ENCODE measurements at regions of chr17 and their contacts with region 1.

Region 1: GRCh38 chr17:49899191-49899485 is 51.3 kb upstream of the TAC4 start:
- DNase-seq: peak; percentile 88 to 92
- H3K4me3 ChIP-seq: no peak overlapping the region
- H3K4me3 Mint-ChIP-seq: no peak overlapping the region
- H3K27ac Mint-ChIP-seq: peak overlapping the region; percentile 58
- H3K4me1 ChIP-seq: peaks cover 83% of the 10 kb centered on the region
- H3K4me1 Mint-ChIP-seq: peaks cover 60% of the 10 kb centered on the region
- H3K27me3 ChIP-seq: no peaks in the 10 kb centered on the region
- H3K27me3 Mint-ChIP-seq: no peaks in the 10 kb centered on the region
- CTCF ChIP-seq: peak; percentile 83 to 95

Region 2: GRCh38 chr17:49031965-49032928 is 866.9 kb before region 1 on chr17:
- CTCF ChIA-PET with region 1: no interaction called
- POLR2A ChIA-PET with region 1: no interaction called
- intact Hi-C with region 1: no loop called
- DNase-seq: peak; percentile 92 to 93
- H3K4me3 ChIP-seq: no peak overlapping the region
- H3K4me3 Mint-ChIP-seq: peak overlapping the region; percentile 0
- H3K27ac Mint-ChIP-seq: peak overlapping the region; percentile 34
- H3K4me1 ChIP-seq: peaks cover 21% of the 10 kb centered on the region
- H3K4me1 Mint-ChIP-seq: peaks cover 52% of the 10 kb centered on the region
- H3K27me3 ChIP-seq: no peaks in the 10 kb centered on the region
- H3K27me3 Mint-ChIP-seq: no peaks in the 10 kb centered on the region
- CTCF ChIP-seq: peak; percentile 98 to 99

Region 3: DNA sequence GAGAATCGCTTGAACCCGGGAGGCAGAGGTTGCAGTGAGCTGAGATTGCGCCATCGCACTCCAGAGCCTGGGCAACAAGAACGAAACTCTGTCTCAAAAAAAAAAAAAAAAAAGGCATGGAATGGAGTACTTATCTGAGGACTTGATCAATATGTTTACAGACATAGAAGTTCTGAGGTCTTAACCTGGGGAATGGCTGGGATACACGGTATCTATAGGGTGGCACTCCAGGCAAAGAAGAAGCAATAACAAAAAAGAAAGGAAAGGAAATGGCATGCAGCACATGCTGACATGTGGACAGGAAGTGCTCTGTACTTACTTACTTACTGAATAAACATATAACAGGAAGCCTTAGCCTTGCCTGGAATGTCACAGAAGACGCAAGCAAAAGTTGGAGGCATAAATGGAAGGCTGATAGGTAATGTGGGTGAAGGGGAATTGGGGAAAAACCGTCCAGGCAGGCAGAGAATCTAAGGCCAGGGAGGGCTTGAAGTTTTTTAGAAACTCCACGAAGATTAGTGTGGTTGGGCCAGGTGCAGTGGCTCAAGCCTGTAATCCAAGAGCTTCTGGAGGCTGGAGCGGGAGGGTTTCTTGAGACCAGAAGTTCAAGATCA is 211.2 kb before region 1 on chr17:
- CTCF ChIA-PET with region 1: no interaction called
- POLR2A ChIA-PET with region 1: no interaction called
- intact Hi-C with region 1: no loop called
- DNase-seq: peak in 1 of 2 experiments; percentile 38
- H3K4me3 ChIP-seq: no peak overlapping the region
- H3K4me3 Mint-ChIP-seq: no peak overlapping the region
- H3K27ac Mint-ChIP-seq: no peak overlapping the region
- H3K4me1 ChIP-seq: peaks cover 5% of the 10 kb centered on the region
- H3K4me1 Mint-ChIP-seq: peaks cover 7% of the 10 kb centered on the region
- H3K27me3 ChIP-seq: no peaks in the 10 kb centered on the region
- H3K27me3 Mint-ChIP-seq: peaks cover 7% of the 10 kb centered on the region
- CTCF ChIP-seq: no peak

Region 4: DNA sequence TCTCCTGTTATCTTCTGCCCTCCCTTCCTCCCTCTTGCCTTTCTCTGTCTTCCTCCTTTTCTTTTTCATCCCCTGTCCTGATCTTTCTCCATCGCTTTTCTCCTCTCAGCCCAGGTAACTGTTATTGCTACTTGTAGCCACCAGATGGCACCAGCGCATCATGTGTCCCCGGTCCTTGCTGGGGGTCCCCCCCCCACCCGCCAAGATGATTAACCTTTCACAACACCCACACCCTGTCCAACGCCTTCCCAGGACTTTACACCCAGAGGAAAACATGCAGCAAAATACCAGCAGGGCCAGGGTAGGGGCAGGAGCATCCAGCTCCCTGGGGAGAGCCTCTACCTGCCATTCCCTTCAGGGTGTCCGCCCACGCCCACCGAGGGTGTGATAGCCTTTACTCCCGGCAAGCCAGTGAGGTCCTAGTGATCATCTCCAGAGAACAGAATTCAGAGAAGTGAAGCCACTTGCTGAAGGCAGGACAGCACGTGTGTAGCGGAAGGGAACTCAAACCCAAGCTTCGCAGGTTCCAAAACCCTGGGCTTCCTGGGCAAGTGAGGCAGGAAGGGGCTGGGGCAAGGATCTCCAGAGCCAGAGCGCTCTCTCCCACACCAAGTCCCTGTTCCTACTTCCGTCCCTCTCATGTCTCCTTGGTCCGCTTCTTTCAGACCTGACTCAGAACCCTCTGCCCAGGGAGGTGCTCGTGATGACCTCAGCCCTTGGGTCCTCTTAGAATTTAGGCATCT is 37.8 kb before region 1 on chr17:
- CTCF ChIA-PET with region 1: interaction called, 7 read pairs
- POLR2A ChIA-PET with region 1: no interaction called
- intact Hi-C with region 1: loop called (anchors 1 kb)
- DNase-seq: peak; percentile 91 to 95
- H3K4me3 ChIP-seq: no peak overlapping the region
- H3K4me3 Mint-ChIP-seq: no peak overlapping the region
- H3K27ac Mint-ChIP-seq: no peak overlapping the region
- H3K4me1 ChIP-seq: peaks cover 26% of the 10 kb centered on the region
- H3K4me1 Mint-ChIP-seq: peaks cover 20% of the 10 kb centered on the region
- H3K27me3 ChIP-seq: no peaks in the 10 kb centered on the region
- H3K27me3 Mint-ChIP-seq: no peaks in the 10 kb centered on the region
- CTCF ChIP-seq: peak; percentile 99 to 100

Region 5: DNA sequence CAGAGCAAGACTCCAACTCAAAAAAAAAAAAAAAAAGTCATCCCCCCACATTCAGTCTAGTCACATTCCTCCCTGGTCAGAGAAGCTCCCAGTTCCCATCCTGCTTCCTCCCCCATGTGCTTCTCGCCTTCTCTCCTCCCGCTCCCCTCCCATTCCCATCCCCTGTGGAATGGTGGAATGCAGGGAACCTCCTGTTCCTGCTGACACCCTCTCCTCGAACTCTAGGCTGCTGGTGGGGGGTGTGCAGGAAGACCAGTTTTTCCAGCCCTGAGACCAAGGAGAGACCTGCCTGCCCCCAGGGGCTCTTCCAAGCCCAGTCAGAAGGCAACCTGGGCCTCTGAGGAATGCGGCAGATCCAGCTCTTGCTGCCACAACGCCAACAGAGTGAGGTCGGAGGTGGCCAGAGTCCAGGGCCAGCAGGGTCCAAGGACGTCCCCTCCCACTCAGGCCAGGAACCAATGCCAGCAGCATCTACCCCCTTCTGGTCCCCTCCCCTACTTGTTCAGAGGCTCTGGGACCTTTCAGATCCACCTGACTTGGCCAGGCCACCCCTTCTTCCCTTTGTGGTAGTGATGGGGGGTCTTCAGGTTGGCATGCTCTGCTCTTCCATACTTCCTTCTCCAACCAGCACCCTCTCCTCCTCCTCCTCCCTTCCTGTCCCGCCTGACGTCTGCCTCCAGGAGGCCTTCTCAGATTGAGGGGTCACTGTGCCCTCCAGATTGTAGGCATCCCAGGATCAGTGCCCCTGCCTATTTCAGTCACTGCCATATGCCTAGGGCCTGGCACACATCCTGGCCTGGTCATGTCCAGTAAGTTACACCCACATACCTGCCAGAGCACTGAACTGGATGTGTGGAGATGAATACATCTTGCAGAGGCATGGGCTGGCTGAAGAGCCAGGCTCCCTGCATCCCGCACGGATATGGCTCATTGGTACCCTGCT is 11.8 kb before region 1 on chr17:
- CTCF ChIA-PET with region 1: interaction called, 20 read pairs
- POLR2A ChIA-PET with region 1: interaction called, 4 read pairs
- intact Hi-C with region 1: loop called (anchors 1 kb)
- DNase-seq: peak; percentile 100
- H3K4me3 ChIP-seq: no peak overlapping the region
- H3K4me3 Mint-ChIP-seq: peak overlapping the region; percentile 59
- H3K27ac Mint-ChIP-seq: peak overlapping the region; percentile 96
- H3K4me1 ChIP-seq: peaks cover 88% of the 10 kb centered on the region
- H3K4me1 Mint-ChIP-seq: peaks cover 75% of the 10 kb centered on the region
- H3K27me3 ChIP-seq: no peaks in the 10 kb centered on the region
- H3K27me3 Mint-ChIP-seq: no peaks in the 10 kb centered on the region
- CTCF ChIP-seq: no peak

Region 6: GRCh38 chr17:49915670-49916069 is 16.5 kb after region 1 on chr17:
- CTCF ChIA-PET with region 1: interaction called, 25 read pairs
- POLR2A ChIA-PET with region 1: interaction called, 5 read pairs
- intact Hi-C with region 1: loop called (anchors 1 kb)
- DNase-seq: peak; percentile 88 to 93
- H3K4me3 ChIP-seq: no peak overlapping the region
- H3K4me3 Mint-ChIP-seq: peak overlapping the region; percentile 8
- H3K27ac Mint-ChIP-seq: peak overlapping the region; percentile 64
- H3K4me1 ChIP-seq: peaks cover 46% of the 10 kb centered on the region
- H3K4me1 Mint-ChIP-seq: peaks cover 52% of the 10 kb centered on the region
- H3K27me3 ChIP-seq: no peaks in the 10 kb centered on the region
- H3K27me3 Mint-ChIP-seq: no peaks in the 10 kb centered on the region
- CTCF ChIP-seq: no peak

Region 7: GRCh38 chr17:49968380-49969133 is 69.4 kb after region 1 on chr17:
- CTCF ChIA-PET with region 1: interaction called, 3 read pairs
- POLR2A ChIA-PET with region 1: no interaction called
- intact Hi-C with region 1: loop called (anchors 1 kb)
- DNase-seq: peak; percentile 98 to 100
- H3K4me3 ChIP-seq: peak overlapping the region; percentile 44
- H3K4me3 Mint-ChIP-seq: peak overlapping the region; percentile 94
- H3K27ac Mint-ChIP-seq: peak overlapping the region; percentile 97
- H3K4me1 ChIP-seq: peaks cover 5% of the 10 kb centered on the region; the same call in 1 of the 2 replicates
- H3K4me1 Mint-ChIP-seq: peaks cover 6% of the 10 kb centered on the region
- H3K27me3 ChIP-seq: no peaks in the 10 kb centered on the region
- H3K27me3 Mint-ChIP-seq: peaks cover 3% of the 10 kb centered on the region
- CTCF ChIP-seq: peak; percentile 2 to 13

Region 8: GRCh38 chr17:50151041-50151936 is 252.2 kb after region 1 on chr17:
- CTCF ChIA-PET with region 1: interaction called, 14 read pairs
- POLR2A ChIA-PET with region 1: no interaction called
- intact Hi-C with region 1: no loop called
- DNase-seq: peak; percentile 97 to 98
- H3K4me3 ChIP-seq: peak overlapping the region; percentile 69
- H3K4me3 Mint-ChIP-seq: peak overlapping the region; percentile 81
- H3K27ac Mint-ChIP-seq: peak overlapping the region; percentile 69
- H3K4me1 ChIP-seq: peaks cover 32% of the 10 kb centered on the region
- H3K4me1 Mint-ChIP-seq: peaks cover 39% of the 10 kb centered on the region
- H3K27me3 ChIP-seq: no peaks in the 10 kb centered on the region
- H3K27me3 Mint-ChIP-seq: no peaks in the 10 kb centered on the region
- CTCF ChIP-seq: peak; percentile 97 to 98